CD8-positive, alpha-beta memory T cell (primary cell): ENCODE measurements at regions of chr1 and their contacts with region 1.

Region 1: DNA sequence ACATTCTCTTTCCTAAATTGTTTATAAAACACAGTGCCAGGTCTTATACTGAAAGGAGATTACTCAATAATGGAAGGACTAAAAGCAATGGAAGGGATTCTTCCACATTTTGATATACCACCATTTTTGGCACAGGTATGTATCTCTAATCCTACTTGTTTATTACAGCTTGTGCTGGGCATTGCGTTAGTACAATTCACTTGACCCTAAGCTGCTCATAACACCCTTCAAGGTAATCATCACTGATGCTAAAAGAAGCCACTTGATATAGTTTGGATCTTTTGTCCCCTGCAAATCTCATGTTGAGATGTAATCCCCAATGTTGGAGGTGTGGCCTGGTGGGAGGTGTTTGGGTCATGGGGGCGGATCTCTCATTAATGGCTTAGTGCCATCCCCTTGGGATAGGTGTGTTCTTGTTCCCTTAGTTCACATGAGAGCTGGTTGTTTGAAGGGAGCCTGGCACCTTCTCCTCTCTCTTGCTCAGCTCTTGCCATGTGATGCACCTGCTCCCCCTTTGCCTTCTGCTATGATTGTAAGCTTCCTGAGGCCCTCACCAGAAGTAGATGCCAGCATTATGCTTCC is 71.1 kb downstream of the NIBAN1 start:
- DNase-seq: no peak
- H3K4me3 ChIP-seq: no peak overlapping the region
- H3K4me3 Mint-ChIP-seq: peak overlapping the region in 2 of 7 donors; percentile 6 to 20
- H3K27ac ChIP-seq: no peak overlapping the region
- H3K27ac Mint-ChIP-seq: peak overlapping the region in 4 of 8 donors; percentile 5 to 69 (median 56)
- H3K4me1 ChIP-seq: peaks cover 5% of the 10 kb centered on the region
- H3K4me1 Mint-ChIP-seq: peaks cover 33 to 65% (median 60%) of the 10 kb centered on the region in 3 donors
- H3K27me3 ChIP-seq: no peaks in the 10 kb centered on the region
- H3K27me3 Mint-ChIP-seq: peaks cover 0 to 1% of the 10 kb centered on the region in 2 donors

Region 2: GRCh38 chr1:184892116-184892515 is 11.1 kb before region 1 on chr1:
- CTCF ChIA-PET with region 1: interaction called, 12 read pairs
- POLR2A ChIA-PET with region 1: interaction called, 3 read pairs
- DNase-seq: peak in 1 of 5 donors; percentile 18
- H3K4me3 ChIP-seq: no peak overlapping the region
- H3K4me3 Mint-ChIP-seq: peak overlapping the region; percentile 13 to 70 (median 65)
- H3K27ac ChIP-seq: peak overlapping the region; percentile 53
- H3K27ac Mint-ChIP-seq: peak overlapping the region; percentile 89 to 100 (median 96)
- H3K4me1 ChIP-seq: peaks cover 30% of the 10 kb centered on the region
- H3K4me1 Mint-ChIP-seq: peaks cover 47 to 86% (median 85%) of the 10 kb centered on the region in 3 donors
- H3K27me3 ChIP-seq: no peaks in the 10 kb centered on the region
- H3K27me3 Mint-ChIP-seq: no peaks in the 10 kb centered on the region

Region 3: DNA sequence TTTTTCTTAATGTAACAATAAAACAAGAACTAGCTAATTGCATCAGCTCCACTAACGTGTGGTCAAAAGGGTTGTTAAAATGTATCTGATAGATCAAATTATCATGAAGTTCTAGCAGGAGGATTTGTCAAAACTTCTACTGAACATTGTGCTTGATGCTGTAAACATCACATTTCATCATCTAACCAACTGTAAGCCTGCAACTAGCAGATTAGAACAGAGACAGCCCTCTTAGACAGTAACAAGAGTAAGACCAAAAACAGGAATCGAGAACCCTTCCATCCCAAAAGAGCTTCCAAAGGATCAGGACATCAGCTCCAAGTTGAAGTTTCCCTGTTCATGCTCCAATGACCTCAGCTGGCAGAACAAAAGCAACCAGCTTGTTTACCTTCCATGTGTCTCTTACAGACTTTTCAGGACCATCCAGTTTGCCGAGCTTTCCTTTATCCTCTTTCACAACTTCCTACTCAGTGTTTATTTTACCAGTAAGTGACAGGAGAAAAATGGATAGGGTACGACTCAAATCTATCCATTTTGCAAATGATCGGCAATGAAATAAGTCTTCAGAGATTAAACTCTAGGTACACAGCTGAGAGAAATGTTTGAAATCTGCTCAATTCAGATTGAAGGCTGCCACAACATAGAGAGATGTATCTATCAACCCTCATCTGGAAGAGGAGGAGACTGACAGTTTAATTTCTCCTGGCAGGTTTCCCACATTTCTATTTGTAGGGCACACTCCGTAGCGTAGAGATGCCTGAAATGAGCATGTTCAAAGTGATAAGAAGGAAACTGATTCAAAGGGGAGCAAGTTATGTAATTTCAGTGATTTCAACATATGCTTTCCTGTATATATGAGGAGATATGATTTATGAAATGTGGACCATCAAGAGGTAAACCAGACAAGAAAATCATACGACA is 26.8 kb after region 1 on chr1:
- CTCF ChIA-PET with region 1: no interaction called
- POLR2A ChIA-PET with region 1: no interaction called
- DNase-seq: no peak
- H3K4me3 ChIP-seq: no peak overlapping the region
- H3K4me3 Mint-ChIP-seq: no peak overlapping the region
- H3K27ac ChIP-seq: no peak overlapping the region
- H3K27ac Mint-ChIP-seq: peak overlapping the region in 5 of 8 donors; percentile 3 to 79 (median 35)
- H3K4me1 ChIP-seq: no peaks in the 10 kb centered on the region
- H3K4me1 Mint-ChIP-seq: peaks cover 26 to 51% (median 42%) of the 10 kb centered on the region in 3 donors
- H3K27me3 ChIP-seq: no peaks in the 10 kb centered on the region
- H3K27me3 Mint-ChIP-seq: no peaks in the 10 kb centered on the region